CD4-positive, alpha-beta memory T cell (primary cell): ENCODE measurements at regions of chr9 and their contacts with region 1.

Region 1: DNA sequence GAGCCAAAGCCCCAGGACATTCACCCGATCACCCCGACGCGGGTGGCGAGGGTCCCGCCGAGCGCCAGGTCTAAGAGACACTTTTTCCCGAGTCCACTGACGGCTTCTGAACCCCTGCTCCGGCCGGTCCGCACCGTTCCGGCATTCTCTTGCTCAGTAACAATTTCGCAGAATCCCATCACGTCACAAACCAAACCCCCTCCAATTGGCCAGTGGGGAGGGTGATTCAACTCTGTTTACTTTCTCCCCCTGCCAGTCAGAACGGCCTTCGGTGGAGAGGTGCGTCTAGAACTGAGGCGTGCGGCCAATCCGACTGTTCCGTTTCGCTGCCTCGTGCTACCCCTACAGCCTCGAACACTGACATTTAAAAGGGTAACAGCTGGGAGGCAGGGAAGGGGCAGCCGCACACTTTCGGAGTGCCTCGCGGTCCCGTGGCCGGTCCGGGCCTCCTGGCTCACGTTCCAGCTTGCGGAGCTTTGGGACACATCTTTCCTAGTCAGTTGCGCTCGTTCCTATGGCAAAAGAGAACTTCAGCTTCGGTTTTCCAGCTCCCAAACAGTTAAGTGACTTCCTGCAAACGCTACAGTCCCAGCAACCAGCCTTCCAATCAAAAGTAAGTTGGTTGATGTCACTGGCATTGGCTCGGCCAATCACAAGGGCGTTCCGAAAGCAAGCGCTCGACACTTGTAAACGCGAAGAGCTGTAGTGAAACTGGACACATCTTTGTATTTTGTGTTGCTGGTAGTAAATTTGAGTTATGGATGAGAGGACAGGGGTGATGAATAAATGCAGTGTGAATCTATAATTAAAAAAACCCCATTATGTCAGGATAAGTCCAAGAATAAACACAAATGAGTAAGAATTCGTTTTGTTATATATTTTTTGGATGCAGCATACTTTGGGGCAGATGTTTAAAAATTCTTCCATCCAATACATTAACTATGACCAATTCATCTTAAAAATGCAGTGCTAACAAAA is at the start of gene KLF9:
- DNase-seq: peak; percentile 95 to 97 (median 96)
- H3K4me3 ChIP-seq: peak within 1 kb of the TSS in 1 of 2 donors; percentile 95
- H3K4me3 Mint-ChIP-seq: peak within 1 kb of the TSS; percentile 94 to 100 (median 96)
- H3K27ac ChIP-seq: peak within 1 kb of the TSS; percentile 98
- H3K27ac Mint-ChIP-seq: peak within 1 kb of the TSS; percentile 99 to 100 (median 100)
- H3K4me1 ChIP-seq: peaks cover 50% of the 10 kb centered on the region
- H3K4me1 Mint-ChIP-seq: peaks cover 28 to 63% (median 45%) of the 10 kb centered on the region in 4 donors
- H3K27me3 ChIP-seq: no peaks in the 10 kb centered on the region
- H3K27me3 Mint-ChIP-seq: peaks cover 0 to 2% of the 10 kb centered on the region in 2 donors
- total RNA-seq, gene KLF9: 18.6 to 20.6 TPM

Region 2: DNA sequence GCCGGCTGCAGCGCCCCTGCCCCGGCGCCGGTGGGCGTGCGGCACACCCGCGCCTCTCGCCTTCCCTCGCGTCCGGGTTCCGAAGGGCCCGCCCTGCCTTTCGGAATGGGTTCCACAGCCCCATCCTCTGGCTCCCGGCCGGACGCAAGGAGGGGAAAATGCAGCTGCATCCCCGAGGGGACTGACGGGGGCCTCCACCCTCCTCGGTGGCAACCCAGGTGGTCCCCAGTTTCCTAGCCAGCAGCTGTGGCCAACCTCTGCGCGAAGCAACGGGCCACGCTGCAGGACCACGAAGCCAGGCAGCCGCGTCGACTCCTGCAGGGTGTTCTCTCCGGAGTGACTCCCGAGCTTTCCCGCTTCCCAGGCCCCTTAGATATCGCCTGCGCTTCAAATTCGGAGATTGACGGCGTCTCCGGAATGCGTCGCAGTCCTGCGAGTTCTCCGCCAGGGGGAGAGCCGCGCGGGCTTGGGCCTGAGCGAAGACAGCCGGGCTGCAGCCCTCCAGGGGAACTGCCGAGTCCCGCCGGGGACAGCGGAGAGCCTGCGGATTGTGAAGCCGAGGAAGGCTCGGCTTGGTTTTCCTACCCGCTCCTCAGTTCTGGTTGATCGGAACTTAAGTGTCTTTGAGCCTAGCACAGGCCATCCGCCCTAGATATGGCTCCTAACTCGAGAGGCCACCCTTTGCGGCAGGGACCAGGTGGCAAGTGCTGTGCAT is 741.3 kb before region 1 on chr9:
- CTCF ChIA-PET with region 1: no interaction called
- POLR2A ChIA-PET with region 1: no interaction called
- intact Hi-C with region 1: loop called (anchors 10 kb)
- DNase-seq: peak; percentile 55 to 70 (median 63)
- H3K4me3 ChIP-seq: peak overlapping the region in 1 of 2 donors; percentile 74
- H3K4me3 Mint-ChIP-seq: peak overlapping the region; percentile 80 to 88 (median 82)
- H3K27ac ChIP-seq: no peak overlapping the region
- H3K27ac Mint-ChIP-seq: peak overlapping the region in 2 of 7 donors; percentile 49 to 75
- H3K4me1 ChIP-seq: peaks cover 12% of the 10 kb centered on the region
- H3K4me1 Mint-ChIP-seq: peaks cover 12 to 29% (median 18%) of the 10 kb centered on the region in 4 donors
- H3K27me3 ChIP-seq: peaks cover 6% of the 10 kb centered on the region
- H3K27me3 Mint-ChIP-seq: peaks cover 12 to 22% of the 10 kb centered on the region in 2 donors

Region 3: GRCh38 chr9:70340572-70340971 is 73.5 kb before region 1 on chr9:
- CTCF ChIA-PET with region 1: interaction called, 6 read pairs
- POLR2A ChIA-PET with region 1: interaction called, 8 read pairs
- intact Hi-C with region 1: loop called (anchors 2 kb)
- DNase-seq: peak in 4 of 5 donors; percentile 13 to 18 (median 16)
- H3K4me3 ChIP-seq: no peak overlapping the region
- H3K4me3 Mint-ChIP-seq: no peak overlapping the region
- H3K27ac ChIP-seq: no peak overlapping the region
- H3K27ac Mint-ChIP-seq: no peak overlapping the region
- H3K4me1 ChIP-seq: peaks cover 3% of the 10 kb centered on the region
- H3K4me1 Mint-ChIP-seq: peaks cover 0 to 4% (median 2%) of the 10 kb centered on the region in 4 donors
- H3K27me3 ChIP-seq: no peaks in the 10 kb centered on the region
- H3K27me3 Mint-ChIP-seq: no peaks in the 10 kb centered on the region

Region 4: DNA sequence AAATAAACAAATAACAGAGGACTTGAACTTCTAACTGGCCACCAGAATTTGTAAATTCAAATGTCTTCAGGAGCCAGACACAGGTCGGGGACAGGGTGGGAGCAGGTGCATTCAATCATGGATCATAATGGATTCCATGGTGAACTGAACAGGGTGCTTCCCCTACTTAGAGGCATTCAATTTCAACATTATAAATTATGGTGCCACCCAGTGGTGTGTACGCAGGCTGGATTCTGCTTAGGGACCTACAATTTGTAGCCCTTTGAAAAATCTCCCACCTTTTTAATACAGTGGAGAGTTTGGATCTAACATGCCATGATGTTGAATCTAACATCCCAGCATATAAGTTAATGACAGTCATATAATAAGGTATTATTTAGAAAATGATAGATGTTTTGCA is 21.9 kb before region 1 on chr9:
- CTCF ChIA-PET with region 1: interaction called, 6 read pairs
- POLR2A ChIA-PET with region 1: interaction called, 28 read pairs
- intact Hi-C with region 1: no loop called
- DNase-seq: no peak
- H3K4me3 ChIP-seq: no peak overlapping the region
- H3K4me3 Mint-ChIP-seq: peak overlapping the region in 2 of 8 donors; percentile 11 to 31
- H3K27ac ChIP-seq: no peak overlapping the region
- H3K27ac Mint-ChIP-seq: peak overlapping the region in 2 of 7 donors; percentile 17 to 31
- H3K4me1 ChIP-seq: peaks cover 74% of the 10 kb centered on the region
- H3K4me1 Mint-ChIP-seq: peaks cover 53 to 88% (median 74%) of the 10 kb centered on the region in 4 donors
- H3K27me3 ChIP-seq: no peaks in the 10 kb centered on the region
- H3K27me3 Mint-ChIP-seq: no peaks in the 10 kb centered on the region

Region 5: GRCh38 chr9:70484210-70485130 is 70.4 kb after region 1 on chr9:
- CTCF ChIA-PET with region 1: interaction called, 8 read pairs
- POLR2A ChIA-PET with region 1: interaction called, 27 read pairs
- intact Hi-C with region 1: loop called (anchors 1 kb)
- DNase-seq: peak in 4 of 5 donors; percentile 32 to 48 (median 38)
- H3K4me3 ChIP-seq: no peak overlapping the region
- H3K4me3 Mint-ChIP-seq: no peak overlapping the region
- H3K27ac ChIP-seq: no peak overlapping the region
- H3K27ac Mint-ChIP-seq: peak overlapping the region in 2 of 7 donors; percentile 67 to 70
- H3K4me1 ChIP-seq: peaks cover 7% of the 10 kb centered on the region
- H3K4me1 Mint-ChIP-seq: peaks cover 0 to 7% (median 2%) of the 10 kb centered on the region in 4 donors
- H3K27me3 ChIP-seq: no peaks in the 10 kb centered on the region
- H3K27me3 Mint-ChIP-seq: peaks cover 0 to 3% of the 10 kb centered on the region in 2 donors

Region 6: DNA sequence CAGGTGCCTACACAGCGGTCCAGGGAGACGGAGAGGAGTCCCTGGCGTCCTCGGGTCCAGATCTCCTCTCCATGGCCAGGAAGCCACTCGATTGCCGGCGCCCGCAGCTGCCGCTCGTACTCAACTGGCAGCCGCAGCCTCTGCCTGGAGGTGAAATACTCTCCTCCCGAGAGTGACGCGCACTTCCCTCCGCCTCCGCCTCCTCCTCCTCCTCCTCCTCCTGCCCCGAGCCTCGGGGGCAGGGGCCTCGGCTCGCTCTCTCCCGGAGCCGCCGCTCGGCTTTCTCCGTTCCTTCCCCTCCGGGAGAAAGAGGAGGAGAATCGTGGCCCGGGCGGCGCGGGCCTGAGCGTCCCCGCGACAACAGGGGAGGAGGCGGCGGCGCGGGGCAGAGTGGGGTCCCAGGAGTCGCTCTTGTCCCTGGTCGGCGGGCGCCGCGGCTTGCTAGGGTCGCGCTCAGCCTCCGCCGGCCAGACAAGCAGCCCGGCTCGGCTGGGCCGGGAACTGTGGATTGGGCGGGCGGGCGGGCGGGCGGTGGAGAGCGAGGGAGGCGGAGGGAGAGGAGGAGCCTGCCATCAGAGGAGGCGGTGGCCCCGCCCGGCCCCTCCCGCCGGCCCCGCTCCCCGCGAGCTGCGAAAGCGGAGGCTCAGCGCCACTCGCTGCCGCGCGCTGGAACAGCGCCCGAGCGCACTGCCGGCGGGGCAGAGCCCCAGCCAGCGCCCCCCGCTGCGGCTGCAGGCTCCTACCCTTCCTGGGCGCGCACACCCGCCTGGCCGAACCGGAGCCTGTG is 1354.5 kb after region 1 on chr9 and contains the start of gene CEMIP2:
- CTCF ChIA-PET with region 1: no interaction called
- POLR2A ChIA-PET with region 1: interaction called, 3 read pairs
- intact Hi-C with region 1: loop called (anchors 5 kb)
- DNase-seq: peak; percentile 87 to 92 (median 90)
- H3K4me3 ChIP-seq: peak within 1 kb of the TSS; percentile 82 to 86
- H3K4me3 Mint-ChIP-seq: peak within 1 kb of the TSS; percentile 95 to 99 (median 97)
- H3K27ac ChIP-seq: peak within 1 kb of the TSS; percentile 87
- H3K27ac Mint-ChIP-seq: peak within 1 kb of the TSS; percentile 97 to 99 (median 98)
- H3K4me1 ChIP-seq: peaks cover 42% of the 10 kb centered on the region
- H3K4me1 Mint-ChIP-seq: peaks cover 32 to 56% (median 38%) of the 10 kb centered on the region in 4 donors
- H3K27me3 ChIP-seq: no peaks in the 10 kb centered on the region
- H3K27me3 Mint-ChIP-seq: no peaks in the 10 kb centered on the region
- total RNA-seq, gene CEMIP2: 85.8 to 89.4 TPM

Region 7: GRCh38 chr9:72364679-72365524 is 1950.8 kb after region 1 on chr9 and contains the start of gene ZFAND5:
- CTCF ChIA-PET with region 1: no interaction called
- POLR2A ChIA-PET with region 1: interaction called, 4 read pairs
- intact Hi-C with region 1: loop called (anchors 5 kb)
- DNase-seq: peak; percentile 89 to 93 (median 91)
- H3K4me3 ChIP-seq: peak within 1 kb of the TSS; percentile 98
- H3K4me3 Mint-ChIP-seq: peak within 1 kb of the TSS; percentile 90 to 97 (median 96)
- H3K27ac ChIP-seq: peak within 1 kb of the TSS; percentile 97
- H3K27ac Mint-ChIP-seq: peak within 1 kb of the TSS; percentile 96 to 100 (median 99)
- H3K4me1 ChIP-seq: peaks cover 43% of the 10 kb centered on the region
- H3K4me1 Mint-ChIP-seq: peaks cover 27 to 50% (median 37%) of the 10 kb centered on the region in 4 donors
- H3K27me3 ChIP-seq: no peaks in the 10 kb centered on the region
- H3K27me3 Mint-ChIP-seq: no peaks in the 10 kb centered on the region
- total RNA-seq, gene ZFAND5: 143 to 148 TPM